ENCODE measurements at regions of chr17 and their contacts with region 1.

Region 1: DNA sequence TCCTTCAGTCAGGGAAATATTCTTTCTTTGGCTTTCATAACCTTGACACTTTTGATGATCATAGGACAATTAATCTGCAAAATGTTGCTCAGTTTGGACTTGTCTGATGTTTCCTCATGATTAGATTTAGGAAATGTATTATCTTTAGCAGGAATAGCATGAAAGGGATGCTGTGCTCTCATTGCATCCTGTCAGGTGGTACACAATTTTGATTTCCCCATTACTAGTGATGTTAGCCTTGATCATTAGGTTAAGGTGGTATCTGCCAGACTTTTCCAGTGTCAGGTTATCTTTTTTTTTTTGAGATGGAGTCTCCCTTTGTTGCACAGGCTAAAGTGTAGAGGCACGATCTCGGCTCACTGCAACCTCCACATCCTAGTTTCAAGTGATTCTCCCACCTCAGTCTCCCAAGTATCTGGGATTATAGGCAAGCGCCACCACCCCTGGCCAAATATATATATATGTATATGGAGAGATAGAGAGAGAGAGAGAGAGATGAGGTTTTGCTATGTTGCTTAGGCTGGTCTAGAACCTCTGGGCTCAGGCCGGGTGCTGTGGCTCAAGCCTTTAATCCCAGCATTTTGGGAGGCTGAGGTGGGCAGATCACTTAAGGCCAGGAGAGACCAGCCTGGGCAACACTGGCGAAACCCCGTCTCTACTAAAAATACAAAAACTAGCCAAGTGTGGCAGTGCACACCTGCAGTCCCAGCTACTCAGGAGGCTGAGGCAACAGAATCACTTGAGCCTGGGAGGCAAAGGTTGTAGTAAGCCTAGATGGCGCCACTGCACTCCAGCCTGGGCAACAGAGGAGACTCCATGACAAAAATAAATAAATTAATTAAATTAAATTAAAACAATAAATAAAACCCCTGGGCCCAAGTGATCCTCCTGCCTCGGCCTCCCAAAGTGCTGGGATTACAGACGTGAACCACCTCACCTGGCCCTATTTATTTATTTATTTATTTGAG is 15.8 kb upstream of the CAVIN1 start:
- DNase-seq: peak; percentile 40
- H3K4me3 ChIP-seq: no peak overlapping the region
- H3K27ac ChIP-seq: no peak overlapping the region
- H3K4me1 ChIP-seq: peaks cover 8% of the 10 kb centered on the region
- H3K27me3 ChIP-seq: no peaks in the 10 kb centered on the region
- CTCF ChIP-seq: peak; percentile 26 to 58
- POLR2A ChIP-seq: no peak

Region 2: GRCh38 chr17:41786227-41787020 is 652.5 kb before region 1 on chr17 and contains the start of gene JUP:
- CTCF ChIA-PET with region 1: no interaction called
- POLR2A ChIA-PET with region 1: no interaction called
- dilution Hi-C with region 1: no loop called
- intact Hi-C with region 1: no loop called
- DNase-seq: peak; percentile 100
- H3K4me3 ChIP-seq: peak within 1 kb of the TSS; percentile 14 to 98 (median 52)
- H3K27ac ChIP-seq: peak within 1 kb of the TSS; percentile 19
- H3K4me1 ChIP-seq: no peaks in the 10 kb centered on the region
- H3K27me3 ChIP-seq: peaks cover 0 to 7% of the 10 kb centered on the region in 2 experiments
- CTCF ChIP-seq: peak; percentile 66 to 81
- POLR2A ChIP-seq: peak; percentile 81
- total RNA-seq, gene JUP: 170 and 171 TPM in 2 replicates

Region 3: GRCh38 chr17:42459256-42459800 is 20.4 kb after region 1 on chr17:
- CTCF ChIA-PET with region 1: interaction called, 8 read pairs
- POLR2A ChIA-PET with region 1: interaction called, 3 read pairs
- dilution Hi-C with region 1: no loop called
- intact Hi-C with region 1: loop called (anchors 2 kb)
- DNase-seq: no peak
- H3K4me3 ChIP-seq: peak overlapping the region; percentile 67 to 80 (median 78)
- H3K27ac ChIP-seq: peak overlapping the region; percentile 51
- H3K4me1 ChIP-seq: peaks cover 37% of the 10 kb centered on the region
- H3K27me3 ChIP-seq: no peaks in the 10 kb centered on the region
- CTCF ChIP-seq: peak; percentile 12 to 28
- POLR2A ChIP-seq: no peak